ENCODE measurements at regions of chr9 and their contacts with region 1.

Region 1: GRCh38 chr9:928362-929042 is 48.0 kb upstream of the DMRT3 start:
- DNase-seq: no peak
- H3K4me3 Mint-ChIP-seq: no peak overlapping the region
- H3K27ac Mint-ChIP-seq: no peak overlapping the region
- H3K4me1 Mint-ChIP-seq: no peaks in the 10 kb centered on the region
- H3K27me3 Mint-ChIP-seq: peaks cover 15% of the 10 kb centered on the region

Region 2: GRCh38 chr9:948497-948896 is 20.0 kb after region 1 on chr9:
- CTCF ChIA-PET with region 1: interaction called, 14 read pairs
- POLR2A ChIA-PET with region 1: no interaction called
- DNase-seq: no peak
- H3K4me3 Mint-ChIP-seq: no peak overlapping the region
- H3K27ac Mint-ChIP-seq: no peak overlapping the region
- H3K4me1 Mint-ChIP-seq: no peaks in the 10 kb centered on the region
- H3K27me3 Mint-ChIP-seq: peaks cover 31% of the 10 kb centered on the region